ENCODE measurements at regions of chr11 and their contacts with region 1.

Region 1: GRCh38 chr11:59135648-59136461 is 6.8 kb upstream of the FAM111A start:
- DNase-seq: peak; percentile 86
- ATAC-seq: peak; percentile 96

Region 2: DNA sequence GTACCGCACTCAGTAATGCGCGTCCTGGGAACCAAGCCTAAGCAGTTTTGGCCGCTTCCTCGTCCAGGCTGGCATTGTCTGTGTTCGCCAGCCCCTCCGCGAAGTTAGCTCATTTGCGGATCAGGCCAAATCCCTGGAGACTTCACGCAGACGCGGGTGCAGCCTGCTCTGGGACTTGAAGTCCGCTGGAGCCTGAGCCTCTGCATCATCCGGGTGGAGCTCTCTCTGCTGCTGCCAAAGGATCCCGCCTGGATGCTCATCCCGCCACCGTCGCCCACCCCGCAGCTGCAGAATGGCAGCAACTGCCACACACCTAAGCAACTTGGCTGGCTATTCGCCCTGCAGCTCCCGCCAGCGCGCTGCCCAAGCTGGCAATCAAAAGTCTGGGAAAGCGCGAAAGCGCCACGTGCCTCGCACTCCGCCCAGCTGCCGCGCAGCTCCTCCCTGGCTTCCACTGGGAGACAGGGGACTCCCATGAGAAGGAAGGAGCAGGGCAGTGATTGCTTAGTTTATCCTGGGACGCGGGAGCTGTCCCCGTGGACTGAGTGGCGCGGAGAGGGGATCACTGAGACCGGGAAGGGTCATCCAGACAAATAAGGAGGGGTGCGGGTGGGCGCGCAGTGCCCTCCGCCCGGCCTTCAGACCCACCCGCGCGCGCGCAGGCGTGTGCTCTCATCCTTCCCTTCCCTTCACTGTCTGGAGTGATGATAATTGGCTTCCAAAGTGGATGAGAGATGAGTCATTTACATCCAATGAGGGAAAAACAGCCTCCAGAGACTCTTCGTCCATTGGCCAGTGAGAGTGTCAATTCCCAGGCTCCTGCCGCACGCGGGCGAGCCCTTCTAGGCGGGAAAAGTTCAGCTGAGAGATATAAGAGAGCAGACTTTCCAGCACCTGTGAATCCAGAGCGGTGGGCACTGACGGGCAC is 73.0 kb before region 1 on chr11:
- intact Hi-C with region 1: loop called (anchors 10 kb)
- DNase-seq: no peak
- ATAC-seq: no peak

Measured in left ventricle myocardium superior (tissue), 1 donor.